Ovary (tissue), 10 donors: ENCODE measurements at regions of chr5 and their contacts with region 1.

Region 1: GRCh38 chr5:10457682-10458574 is 16.2 kb downstream of the ROPN1L start:
- DNase-seq: no peak
- H3K4me3 ChIP-seq: no peak overlapping the region
- H3K27ac ChIP-seq: no peak overlapping the region
- H3K4me1 ChIP-seq: peaks cover 1% of the 10 kb centered on the region
- H3K27me3 ChIP-seq: no peaks in the 10 kb centered on the region
- CTCF ChIP-seq: no peak
- EP300 ChIP-seq: no peak
- POLR2A ChIP-seq: no peak

Region 2: GRCh38 chr5:10627160-10627701 is 169.3 kb after region 1 on chr5:
- intact Hi-C with region 1: loop called (anchors 5 to 10 kb)
- DNase-seq: peak in 2 of 5 donors; percentile 42 to 53
- H3K4me3 ChIP-seq: peak overlapping the region; percentile 26
- H3K27ac ChIP-seq: peak overlapping the region; percentile 44 to 79
- H3K4me1 ChIP-seq: peaks cover 4% of the 10 kb centered on the region
- H3K27me3 ChIP-seq: no peaks in the 10 kb centered on the region
- CTCF ChIP-seq: no peak
- EP300 ChIP-seq: no peak
- POLR2A ChIP-seq: no peak

Region 3: GRCh38 chr5:10635257-10635866 is 177.4 kb after region 1 on chr5:
- intact Hi-C with region 1: loop called in 1 of 4 experiments (anchors 5 kb)
- DNase-seq: no peak
- H3K4me3 ChIP-seq: no peak overlapping the region
- H3K27ac ChIP-seq: no peak overlapping the region
- H3K4me1 ChIP-seq: no peaks in the 10 kb centered on the region
- H3K27me3 ChIP-seq: no peaks in the 10 kb centered on the region
- CTCF ChIP-seq: no peak
- EP300 ChIP-seq: no peak
- POLR2A ChIP-seq: no peak

Region 4: DNA sequence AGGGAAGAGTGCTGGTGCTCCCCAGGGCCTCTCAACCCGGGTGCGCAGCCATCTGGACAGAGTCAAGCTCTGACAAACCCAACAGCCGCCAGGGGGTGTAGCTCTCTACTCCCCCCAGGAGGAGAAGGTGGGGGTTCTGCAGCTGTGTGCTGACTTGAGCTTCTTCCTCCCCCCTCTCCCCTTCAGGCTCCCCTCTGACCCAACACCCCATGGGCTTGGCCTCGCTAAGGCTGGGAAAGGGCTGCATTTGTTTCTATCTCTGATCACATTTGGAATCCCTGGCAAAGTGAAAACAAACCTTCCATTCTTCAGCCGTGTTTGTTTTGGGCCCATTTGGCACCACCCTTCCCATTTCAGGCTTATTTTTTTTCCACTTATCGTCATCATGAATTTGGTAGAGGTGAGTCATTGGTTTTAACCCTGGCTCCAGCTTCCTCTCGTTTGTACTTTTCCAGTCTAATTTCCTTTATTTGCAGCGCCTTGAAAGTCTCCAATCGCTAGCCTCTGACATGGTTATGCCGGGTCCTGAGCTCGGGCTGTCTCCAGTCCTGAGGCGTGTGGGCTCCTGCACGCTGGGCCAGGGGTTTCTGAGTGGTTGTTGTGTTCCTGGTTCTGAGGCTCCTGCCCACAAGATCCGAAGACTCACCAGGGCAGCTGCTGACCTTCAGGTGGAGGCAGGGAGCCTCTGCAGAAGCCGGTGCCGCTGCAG is 267.0 kb after region 1 on chr5:
- intact Hi-C with region 1: no loop called
- DNase-seq: peak in 1 of 5 donors; percentile 23
- H3K4me3 ChIP-seq: no peak overlapping the region
- H3K27ac ChIP-seq: no peak overlapping the region
- H3K4me1 ChIP-seq: peaks cover 2% of the 10 kb centered on the region
- H3K27me3 ChIP-seq: no peaks in the 10 kb centered on the region
- CTCF ChIP-seq: no peak
- EP300 ChIP-seq: no peak
- POLR2A ChIP-seq: no peak